HEK293 (cell line): ENCODE measurements at regions of chr3 and their contacts with region 1.

Region 1: DNA sequence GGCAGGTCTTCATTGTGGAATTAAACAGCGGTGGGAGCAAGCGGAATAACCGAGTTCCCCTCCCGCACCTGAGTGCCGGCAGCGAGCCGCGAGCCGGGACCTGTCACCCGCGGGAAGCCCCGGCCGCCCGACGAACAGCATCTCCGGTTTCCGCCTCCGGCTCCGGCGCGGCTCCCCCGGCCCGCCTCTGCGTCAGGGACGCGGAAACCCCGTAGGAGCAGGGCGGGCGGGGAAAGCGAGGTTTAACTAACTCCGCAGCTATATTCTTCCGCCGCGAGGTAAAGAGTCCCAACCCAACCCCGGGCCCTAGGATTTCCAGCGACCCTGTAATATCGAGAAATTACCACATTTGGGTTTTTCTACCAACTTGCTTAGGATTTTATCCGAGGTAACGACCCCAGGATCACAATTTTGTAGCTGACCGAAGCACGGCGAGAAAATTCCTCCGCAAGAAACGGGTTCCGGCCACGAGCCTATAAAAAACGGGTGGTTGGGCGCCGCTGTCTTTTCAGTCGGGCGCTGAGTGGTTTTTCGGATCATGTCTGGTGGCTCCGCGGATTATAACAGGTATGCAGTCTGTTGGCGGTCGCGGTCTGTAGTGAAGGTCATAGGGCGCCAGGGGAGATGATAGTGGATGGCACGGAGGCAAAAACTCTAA is at the start of gene EIF4A2:
- H3K4me3 ChIP-seq: peak within 1 kb of the TSS; percentile 100
- H3K27ac ChIP-seq: peak within 1 kb of the TSS; percentile 97
- H3K4me1 ChIP-seq: no peaks in the 10 kb centered on the region
- CTCF ChIP-seq: no peak

Region 2: DNA sequence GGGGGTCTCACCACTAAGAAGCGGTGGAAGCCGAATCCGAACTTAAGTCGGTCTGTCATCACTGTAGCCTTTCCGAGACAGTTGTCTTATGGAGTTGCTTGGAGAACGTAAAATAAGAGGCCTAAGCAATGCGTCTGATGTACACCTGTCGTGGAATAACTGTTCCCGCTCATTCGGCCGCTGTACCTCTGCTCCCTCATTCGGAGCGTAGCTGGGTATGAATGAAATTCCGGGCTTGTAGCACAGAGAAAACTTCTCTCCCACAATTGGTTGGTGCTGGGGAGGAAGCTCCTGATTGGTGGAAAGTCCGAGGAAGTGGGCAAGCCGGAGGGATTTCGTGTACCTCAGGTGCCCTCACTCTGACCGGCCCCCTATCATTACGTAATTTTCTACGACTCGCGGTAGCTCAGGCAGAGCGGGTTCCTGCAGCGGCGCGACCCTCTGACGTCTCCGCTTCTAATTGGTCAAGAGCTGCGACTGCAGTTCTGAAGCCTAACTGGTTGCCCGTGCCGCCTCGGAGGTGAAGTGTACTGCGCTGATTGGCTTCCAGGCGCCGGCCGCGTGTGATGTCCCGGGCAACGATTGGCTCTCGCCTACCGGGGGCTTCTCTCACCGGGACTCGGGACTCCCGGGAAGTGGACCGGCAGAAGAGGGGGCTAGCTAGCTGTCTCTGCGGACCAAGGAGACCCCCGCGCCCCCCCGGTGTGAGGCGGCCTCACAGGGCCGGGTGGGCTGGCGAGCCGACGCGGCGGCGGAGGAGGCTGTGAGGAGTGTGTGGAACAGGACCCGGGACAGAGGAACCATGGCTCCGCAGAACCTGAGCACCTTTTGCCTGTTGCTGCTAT is 212.9 kb before region 1 on chr3 and contains the start of gene DNAJB11:
- CTCF ChIA-PET with region 1: no interaction called
- POLR2A ChIA-PET with region 1: interaction called, 33 read pairs
- H3K4me3 ChIP-seq: peak within 1 kb of the TSS; percentile 96
- H3K27ac ChIP-seq: no peak within 1 kb of the TSS
- H3K4me1 ChIP-seq: no peaks in the 10 kb centered on the region
- CTCF ChIP-seq: no peak

Region 3: GRCh38 chr3:186598108-186598784 is 185.0 kb before region 1 on chr3:
- CTCF ChIA-PET with region 1: no interaction called
- POLR2A ChIA-PET with region 1: interaction called, 14 read pairs
- H3K4me3 ChIP-seq: no peak overlapping the region
- H3K27ac ChIP-seq: no peak overlapping the region
- H3K4me1 ChIP-seq: no peaks in the 10 kb centered on the region
- CTCF ChIP-seq: no peak

Region 4: DNA sequence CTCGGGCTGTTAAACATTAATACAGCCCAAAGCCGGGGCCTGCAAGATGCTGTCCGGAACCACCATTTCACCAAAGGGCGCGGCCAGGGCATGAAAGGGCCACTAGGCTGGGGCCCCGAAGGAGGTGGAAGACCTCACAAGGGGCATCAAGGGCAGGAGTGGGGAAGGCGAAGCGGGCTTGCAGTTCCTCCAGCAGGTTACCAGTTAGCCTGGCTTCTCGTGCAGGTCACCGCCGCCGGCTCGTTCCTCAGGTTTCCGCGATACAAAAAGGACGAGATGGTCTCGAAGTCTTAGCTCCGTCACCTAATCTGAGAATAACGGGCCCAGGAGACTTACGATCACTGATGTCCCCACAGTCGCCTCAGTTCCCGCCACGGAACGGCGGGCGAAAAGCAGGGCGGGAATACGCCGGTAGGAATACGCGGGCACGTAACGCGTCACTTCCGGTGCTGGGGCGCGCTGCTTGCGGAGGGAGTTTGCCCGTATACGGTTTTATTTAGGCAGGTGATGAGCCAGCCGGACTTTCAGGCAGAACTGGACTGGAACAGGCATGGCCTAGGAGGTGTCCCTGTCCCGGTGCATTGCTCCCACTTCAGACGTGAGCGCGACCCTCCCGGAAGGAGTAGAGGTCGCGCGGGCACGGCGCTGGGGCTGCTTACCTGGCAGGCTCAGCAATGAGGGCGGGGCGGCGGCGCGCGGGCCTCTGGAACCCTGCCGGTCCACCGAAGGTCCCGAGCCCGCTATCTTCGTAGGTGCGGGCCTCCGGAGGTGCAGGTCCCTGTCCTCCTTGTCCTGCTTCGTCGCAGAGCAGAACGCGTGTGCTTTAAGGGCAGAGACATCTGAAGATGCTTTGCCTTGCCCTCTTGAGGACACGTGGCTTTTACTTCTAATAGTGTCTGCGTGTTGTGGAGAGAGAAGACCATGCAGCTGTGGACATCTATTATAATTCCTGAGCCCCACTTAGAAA is 23.2 kb after region 1 on chr3 and contains the start of gene RFC4:
- CTCF ChIA-PET with region 1: interaction called, 4 read pairs
- POLR2A ChIA-PET with region 1: interaction called, 35 read pairs
- H3K4me3 ChIP-seq: peak within 1 kb of the TSS; percentile 95
- H3K27ac ChIP-seq: peak within 1 kb of the TSS; percentile 88
- H3K4me1 ChIP-seq: no peaks in the 10 kb centered on the region
- CTCF ChIP-seq: no peak